ENCODE measurements at regions of chr6 and their contacts with region 1.

Region 1: GRCh38 chr6:149140137-149140909 is 177.2 kb upstream of the TAB2 start:
- DNase-seq: peak; percentile 87
- H3K4me3 Mint-ChIP-seq: peak overlapping the region; percentile 85
- H3K27ac Mint-ChIP-seq: peak overlapping the region; percentile 100
- H3K4me1 Mint-ChIP-seq: peaks cover 48% of the 10 kb centered on the region
- H3K27me3 Mint-ChIP-seq: no peaks in the 10 kb centered on the region

Region 2: DNA sequence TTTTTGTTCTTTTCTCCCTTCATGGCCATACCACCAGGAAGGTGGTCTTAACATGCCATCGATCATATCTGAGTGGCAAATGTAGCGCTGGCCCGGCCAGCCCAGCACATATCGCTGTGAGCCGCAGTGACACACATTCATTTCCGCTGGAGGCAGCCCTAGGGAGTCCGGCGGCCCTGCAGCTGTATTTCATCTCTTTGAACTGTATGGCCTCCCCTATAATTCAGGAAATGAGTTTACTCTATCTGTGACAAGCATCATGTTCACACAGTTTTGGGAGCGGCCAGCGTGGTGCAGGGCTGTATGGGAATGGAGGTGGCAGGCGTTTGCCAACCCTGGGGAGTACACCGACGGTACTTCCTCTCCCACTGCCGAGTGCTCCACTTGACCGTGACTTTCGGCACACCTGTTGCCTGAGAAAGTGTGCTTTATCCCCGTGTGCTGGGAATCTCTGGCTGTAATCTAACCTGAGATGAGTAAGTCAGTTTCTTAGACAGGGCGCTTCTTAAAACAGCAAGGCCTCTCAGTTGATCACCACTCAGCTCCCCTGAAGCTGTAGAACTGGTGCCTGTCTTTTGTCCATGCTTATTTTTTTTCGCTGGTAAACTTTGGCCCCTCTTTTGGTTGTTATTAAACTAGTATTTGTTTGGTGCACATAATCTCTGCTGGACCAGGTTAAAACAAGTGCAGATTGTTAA is 79.9 kb before region 1 on chr6:
- intact Hi-C with region 1: no loop called
- DNase-seq: peak; percentile 88
- H3K4me3 Mint-ChIP-seq: peak overlapping the region; percentile 80
- H3K27ac Mint-ChIP-seq: peak overlapping the region; percentile 95
- H3K4me1 Mint-ChIP-seq: peaks cover 57% of the 10 kb centered on the region
- H3K27me3 Mint-ChIP-seq: no peaks in the 10 kb centered on the region

Region 3: GRCh38 chr6:149094156-149094555 is 46.2 kb before region 1 on chr6:
- intact Hi-C with region 1: loop called (anchors 1 kb)
- DNase-seq: peak; percentile 76
- H3K4me3 Mint-ChIP-seq: peak overlapping the region; percentile 71
- H3K27ac Mint-ChIP-seq: peak overlapping the region; percentile 95
- H3K4me1 Mint-ChIP-seq: peaks cover 74% of the 10 kb centered on the region
- H3K27me3 Mint-ChIP-seq: no peaks in the 10 kb centered on the region

Region 4: DNA sequence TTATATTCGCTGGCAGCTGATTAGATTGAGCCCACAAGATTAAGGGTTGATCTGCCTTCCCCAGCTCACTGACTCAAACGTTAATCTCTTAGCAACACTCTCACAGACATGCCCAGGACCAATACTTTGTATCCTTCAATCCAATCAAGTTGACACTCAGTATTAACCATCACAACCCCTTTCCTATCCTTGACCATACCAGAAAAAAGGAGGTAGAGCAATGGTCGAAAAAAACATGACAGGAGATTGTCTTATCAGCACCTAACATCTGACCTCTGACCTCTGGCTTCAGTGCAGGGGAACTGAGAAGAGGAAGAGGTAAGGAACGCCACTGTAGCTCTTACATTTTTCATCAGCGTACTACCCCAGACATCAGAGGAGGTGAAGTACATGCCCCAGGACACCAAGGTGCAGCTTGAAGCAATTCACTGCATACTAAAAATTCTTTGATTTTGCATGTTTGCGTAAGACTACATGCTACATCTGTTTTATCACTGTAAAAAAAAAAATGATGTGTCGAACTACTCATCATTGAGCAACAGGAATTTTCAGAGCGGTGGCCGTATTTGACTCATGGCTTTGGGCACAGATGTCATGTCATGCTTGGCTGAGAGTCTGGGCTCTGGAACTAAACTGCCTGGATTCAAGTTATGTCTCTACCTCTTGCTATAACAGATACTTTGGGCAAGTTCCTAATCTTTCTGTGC is 10.8 kb before region 1 on chr6:
- intact Hi-C with region 1: loop called (anchors 1 kb)
- DNase-seq: no peak
- H3K4me3 Mint-ChIP-seq: no peak overlapping the region
- H3K27ac Mint-ChIP-seq: peak overlapping the region; percentile 97
- H3K4me1 Mint-ChIP-seq: peaks cover 69% of the 10 kb centered on the region
- H3K27me3 Mint-ChIP-seq: no peaks in the 10 kb centered on the region

Region 5: DNA sequence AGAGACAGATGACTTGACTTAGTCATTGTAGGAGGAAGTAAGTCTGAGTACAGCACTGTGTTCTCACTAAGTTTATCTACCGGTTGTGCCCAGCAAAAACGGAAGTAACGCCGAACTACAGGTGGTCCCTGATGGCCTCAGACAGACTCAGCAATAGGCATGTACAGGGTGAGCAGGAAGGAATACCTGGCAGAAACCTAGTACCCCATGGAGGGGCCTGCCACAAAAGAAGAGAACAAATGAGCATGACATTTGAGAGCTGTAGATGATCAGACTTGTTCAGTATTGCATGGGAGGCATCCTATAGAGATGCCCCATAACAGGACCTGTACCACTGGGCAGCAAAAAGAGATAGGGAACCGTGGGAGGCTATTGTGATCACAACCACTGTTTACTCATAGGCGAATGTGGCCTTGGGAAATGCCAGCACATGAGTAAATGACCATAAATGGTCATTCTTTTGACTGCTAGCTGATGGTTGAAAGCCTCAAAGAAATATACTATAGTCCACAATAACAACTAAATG is 70.8 kb after region 1 on chr6:
- intact Hi-C with region 1: loop called (anchors 1 kb)
- DNase-seq: peak; percentile 74
- H3K4me3 Mint-ChIP-seq: no peak overlapping the region
- H3K27ac Mint-ChIP-seq: no peak overlapping the region
- H3K4me1 Mint-ChIP-seq: peaks cover 29% of the 10 kb centered on the region
- H3K27me3 Mint-ChIP-seq: no peaks in the 10 kb centered on the region

Region 6: DNA sequence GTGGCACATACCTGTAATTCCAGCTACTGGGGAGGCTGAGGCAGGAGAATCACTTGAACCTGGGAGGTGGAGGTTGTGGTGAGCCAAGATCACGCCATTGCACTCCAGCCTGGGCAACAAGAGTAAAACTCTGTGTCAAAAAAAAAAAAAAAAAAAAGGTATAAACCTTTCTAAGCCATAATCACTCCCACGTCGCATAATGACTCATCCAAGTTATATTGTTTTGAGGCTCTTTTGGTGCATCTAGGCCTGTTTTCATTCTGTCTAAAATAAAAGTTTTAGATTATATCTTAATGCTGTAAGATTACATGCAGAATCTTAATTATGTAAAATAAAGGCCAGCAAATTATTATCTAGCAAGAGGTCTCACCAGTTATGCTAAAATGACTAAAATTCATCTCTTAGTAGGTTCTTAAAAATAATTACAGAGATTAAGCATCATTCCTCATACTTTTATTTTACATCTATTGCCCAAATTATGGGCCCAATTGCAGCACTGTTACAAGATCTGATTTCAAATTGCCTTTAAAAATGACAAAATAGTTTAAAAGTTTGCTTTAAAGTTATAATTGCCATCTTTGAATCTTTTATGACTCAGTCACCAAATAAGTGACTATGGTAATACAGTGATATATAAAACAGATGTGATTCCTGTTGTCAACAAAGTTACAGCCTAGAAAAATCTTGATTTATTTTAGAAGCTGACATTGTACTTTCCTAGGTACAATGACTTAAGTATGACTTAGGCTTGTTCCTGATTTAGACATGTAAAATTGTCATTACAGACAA is 249.4 kb after region 1 on chr6:
- intact Hi-C with region 1: loop called (anchors 5 kb)
- DNase-seq: no peak
- H3K4me3 Mint-ChIP-seq: no peak overlapping the region
- H3K27ac Mint-ChIP-seq: peak overlapping the region; percentile 46
- H3K4me1 Mint-ChIP-seq: peaks cover 60% of the 10 kb centered on the region
- H3K27me3 Mint-ChIP-seq: no peaks in the 10 kb centered on the region